ENCODE measurements at regions of chr12 and their contacts with region 1.

Region 1: GRCh38 chr12:7219599-7220243 is 30.2 kb downstream of the PEX5 start:
- DNase-seq: peak; percentile 60 to 69
- H3K4me3 ChIP-seq: no peak overlapping the region
- H3K27ac ChIP-seq: no peak overlapping the region
- H3K4me1 ChIP-seq: no peaks in the 10 kb centered on the region
- H3K27me3 ChIP-seq: no peaks in the 10 kb centered on the region
- CTCF ChIP-seq: peak; percentile 96

Region 2: GRCh38 chr12:7369274-7369729 is 149.6 kb after region 1 on chr12:
- CTCF ChIA-PET with region 1: no interaction called
- POLR2A ChIA-PET with region 1: no interaction called
- intact Hi-C with region 1: loop called (anchors 2 kb)
- DNase-seq: peak; percentile 72 to 89
- H3K4me3 ChIP-seq: peak overlapping the region; percentile 40; the same call in 1 of the 2 replicates
- H3K27ac ChIP-seq: no peak overlapping the region
- H3K4me1 ChIP-seq: no peaks in the 10 kb centered on the region
- H3K27me3 ChIP-seq: no peaks in the 10 kb centered on the region
- CTCF ChIP-seq: no peak

Region 3: DNA sequence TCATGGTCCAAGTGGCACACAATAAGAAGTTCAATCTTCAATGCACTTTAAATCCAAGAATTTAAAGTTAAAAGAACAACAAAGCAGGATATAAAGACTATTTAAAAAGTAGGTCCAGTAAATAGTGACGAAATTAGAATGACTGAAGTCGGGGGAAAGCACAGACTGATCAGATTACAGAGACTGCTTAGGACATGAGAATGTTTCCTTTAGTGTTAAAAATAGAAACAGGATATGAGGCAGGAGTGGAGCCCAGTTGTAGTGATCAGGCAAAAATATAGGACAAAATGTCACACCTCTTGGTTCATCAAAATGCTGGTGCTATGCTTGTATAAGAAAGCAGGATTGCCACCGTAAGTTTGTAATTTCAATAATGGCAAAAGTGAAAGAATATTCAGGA is 336.0 kb after region 1 on chr12:
- CTCF ChIA-PET with region 1: no interaction called
- POLR2A ChIA-PET with region 1: no interaction called
- intact Hi-C with region 1: no loop called
- DNase-seq: peak; percentile 4 to 52
- H3K4me3 ChIP-seq: no peak overlapping the region
- H3K27ac ChIP-seq: peak overlapping the region; percentile 30; the same call in 1 of the 2 replicates
- H3K4me1 ChIP-seq: peaks cover 10% of the 10 kb centered on the region
- H3K27me3 ChIP-seq: no peaks in the 10 kb centered on the region
- CTCF ChIP-seq: no peak